Activated naive CD4-positive, alpha-beta T cell treated with anti-CD3 and anti-CD28 coated beads for 36 hours (primary cell): ENCODE measurements at regions of chr6 and their contacts with region 1.

Region 1: DNA sequence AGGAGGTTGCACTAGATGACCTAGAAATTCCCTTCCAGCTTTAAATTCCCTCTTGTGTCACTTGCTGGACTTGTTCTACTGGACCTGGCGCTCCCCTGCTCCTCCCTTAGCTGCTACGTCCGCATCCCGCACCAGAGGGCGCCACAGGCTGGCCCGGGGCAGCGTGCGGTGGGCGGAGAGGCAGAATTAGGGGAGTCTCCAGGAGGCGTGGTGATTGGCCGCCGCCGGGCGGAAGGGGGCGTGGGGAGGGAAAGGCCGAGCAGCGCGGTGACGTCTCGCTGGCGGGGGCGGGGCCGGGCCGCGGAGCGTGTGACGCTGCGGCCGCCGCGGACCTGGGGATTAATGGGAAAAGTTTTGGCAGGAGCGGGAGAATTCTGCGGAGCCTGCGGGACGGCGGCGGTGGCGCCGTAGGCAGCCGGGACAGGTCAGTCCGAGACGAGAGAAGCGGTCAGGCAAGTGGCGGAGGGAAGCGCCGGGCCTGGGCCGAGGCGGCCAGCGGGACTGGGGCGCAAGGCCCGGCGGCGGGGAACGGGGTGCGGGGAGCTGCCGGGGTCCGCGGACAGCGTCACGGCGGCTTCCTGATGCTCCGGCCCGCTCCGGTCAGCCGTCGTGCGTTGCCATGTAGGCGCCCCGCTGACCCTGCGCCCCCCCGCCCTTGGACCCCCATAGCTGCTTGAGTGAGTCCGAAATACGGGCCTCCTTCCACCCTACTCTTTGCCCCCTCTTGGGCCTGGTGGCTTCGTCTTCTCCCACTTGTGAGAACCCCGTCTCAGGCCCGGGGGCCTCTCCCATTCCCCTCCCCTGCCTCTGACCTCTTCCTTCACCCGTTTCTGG is at the start of gene PPARD:
- DNase-seq: peak; percentile 99
- H3K4me3 Mint-ChIP-seq: peak within 1 kb of the TSS; percentile 97
- H3K27ac Mint-ChIP-seq: peak within 1 kb of the TSS; percentile 89
- H3K4me1 Mint-ChIP-seq: peaks cover 37% of the 10 kb centered on the region
- H3K27me3 Mint-ChIP-seq: no peaks in the 10 kb centered on the region
- total RNA-seq, gene PPARD: 10.8 to 11.2 TPM

Region 2: DNA sequence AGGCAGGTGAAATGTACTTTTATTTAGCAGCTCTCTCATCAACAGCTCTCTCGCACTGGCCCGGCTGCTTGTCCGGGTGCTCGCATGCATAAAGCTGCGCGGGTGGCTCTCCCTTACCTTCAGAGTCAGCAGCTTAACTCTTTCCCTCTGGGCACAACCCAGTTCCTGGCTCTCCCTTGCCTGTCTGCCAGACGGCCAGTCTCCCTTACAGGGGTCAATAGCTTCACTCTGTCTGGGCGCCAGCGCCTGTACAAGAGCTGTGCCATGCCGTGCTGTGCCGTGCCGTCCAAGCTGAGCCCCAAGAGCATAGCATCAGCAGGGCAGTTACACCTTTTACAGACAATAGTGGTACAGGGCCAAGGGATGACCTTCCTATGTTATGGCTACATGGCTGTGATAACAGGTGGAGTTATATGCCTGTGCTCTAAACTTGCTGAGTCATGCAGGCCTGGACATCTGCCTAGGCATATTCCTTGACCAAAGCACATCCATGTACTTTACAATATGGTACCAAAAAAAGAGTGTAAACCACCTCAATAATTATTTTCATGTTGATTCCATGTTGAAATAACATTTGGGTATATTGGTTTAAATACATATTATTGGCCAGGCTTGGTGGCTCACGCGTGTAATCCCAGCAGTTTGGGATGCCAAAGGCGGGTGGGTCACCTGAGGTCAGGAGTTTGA is 502.7 kb before region 1 on chr6:
- CTCF ChIA-PET with region 1: no interaction called
- intact Hi-C with region 1: no loop called
- DNase-seq: no peak
- H3K4me3 Mint-ChIP-seq: no peak overlapping the region
- H3K27ac Mint-ChIP-seq: no peak overlapping the region
- H3K4me1 Mint-ChIP-seq: peaks cover 2% of the 10 kb centered on the region
- H3K27me3 Mint-ChIP-seq: no peaks in the 10 kb centered on the region

Region 3: GRCh38 chr6:35181933-35182612 is 160.4 kb before region 1 on chr6:
- CTCF ChIA-PET with region 1: no interaction called
- intact Hi-C with region 1: no loop called
- DNase-seq: no peak
- H3K4me3 Mint-ChIP-seq: no peak overlapping the region
- H3K27ac Mint-ChIP-seq: no peak overlapping the region
- H3K4me1 Mint-ChIP-seq: peaks cover 2% of the 10 kb centered on the region
- H3K27me3 Mint-ChIP-seq: peaks cover 17% of the 10 kb centered on the region

Region 4: DNA sequence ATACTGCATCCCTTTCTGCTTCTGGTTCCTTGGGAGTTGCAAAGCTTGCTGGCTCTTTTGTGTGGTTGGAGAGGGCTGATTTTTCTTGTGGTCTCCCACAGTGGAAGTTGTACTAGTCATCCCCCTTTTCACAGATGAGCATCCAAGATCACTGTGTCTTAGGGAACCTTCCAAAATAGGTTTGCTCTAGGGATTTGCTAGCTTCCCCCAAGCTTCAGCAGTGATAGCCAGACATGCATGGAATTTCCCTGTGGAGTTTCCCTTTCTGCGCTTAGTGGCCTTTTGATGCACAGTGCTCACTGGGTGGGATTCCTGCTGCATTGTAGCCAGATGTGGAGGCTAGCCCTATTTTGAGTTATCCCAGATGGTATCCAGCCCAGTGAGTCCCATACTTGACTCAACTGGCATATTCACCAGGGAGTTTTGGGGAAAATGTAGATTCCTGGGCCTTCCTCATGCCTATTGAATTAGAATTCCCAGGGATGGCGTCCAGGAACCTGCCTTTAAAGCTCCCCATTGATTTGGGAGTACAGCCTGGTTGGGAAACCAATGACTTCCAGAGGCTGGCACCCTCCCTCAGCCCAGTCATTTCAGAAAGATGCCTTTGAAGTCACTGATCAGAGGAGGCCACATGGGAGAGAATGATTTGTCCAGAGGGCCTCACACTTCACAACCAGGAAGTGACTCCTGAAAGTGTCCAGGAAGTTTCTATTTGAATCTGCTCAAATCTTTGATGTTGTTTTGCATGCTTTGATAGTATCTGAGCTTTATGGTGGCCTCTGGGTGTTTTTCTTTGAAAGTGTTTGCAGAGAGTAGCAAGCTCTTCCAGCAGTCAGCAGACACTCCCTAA is 25.8 kb after region 1 on chr6:
- CTCF ChIA-PET with region 1: interaction called, 3 read pairs
- intact Hi-C with region 1: loop called (anchors 2 kb)
- DNase-seq: peak; percentile 64
- H3K4me3 Mint-ChIP-seq: no peak overlapping the region
- H3K27ac Mint-ChIP-seq: peak overlapping the region; percentile 33
- H3K4me1 Mint-ChIP-seq: peaks cover 49% of the 10 kb centered on the region
- H3K27me3 Mint-ChIP-seq: no peaks in the 10 kb centered on the region

Region 5: DNA sequence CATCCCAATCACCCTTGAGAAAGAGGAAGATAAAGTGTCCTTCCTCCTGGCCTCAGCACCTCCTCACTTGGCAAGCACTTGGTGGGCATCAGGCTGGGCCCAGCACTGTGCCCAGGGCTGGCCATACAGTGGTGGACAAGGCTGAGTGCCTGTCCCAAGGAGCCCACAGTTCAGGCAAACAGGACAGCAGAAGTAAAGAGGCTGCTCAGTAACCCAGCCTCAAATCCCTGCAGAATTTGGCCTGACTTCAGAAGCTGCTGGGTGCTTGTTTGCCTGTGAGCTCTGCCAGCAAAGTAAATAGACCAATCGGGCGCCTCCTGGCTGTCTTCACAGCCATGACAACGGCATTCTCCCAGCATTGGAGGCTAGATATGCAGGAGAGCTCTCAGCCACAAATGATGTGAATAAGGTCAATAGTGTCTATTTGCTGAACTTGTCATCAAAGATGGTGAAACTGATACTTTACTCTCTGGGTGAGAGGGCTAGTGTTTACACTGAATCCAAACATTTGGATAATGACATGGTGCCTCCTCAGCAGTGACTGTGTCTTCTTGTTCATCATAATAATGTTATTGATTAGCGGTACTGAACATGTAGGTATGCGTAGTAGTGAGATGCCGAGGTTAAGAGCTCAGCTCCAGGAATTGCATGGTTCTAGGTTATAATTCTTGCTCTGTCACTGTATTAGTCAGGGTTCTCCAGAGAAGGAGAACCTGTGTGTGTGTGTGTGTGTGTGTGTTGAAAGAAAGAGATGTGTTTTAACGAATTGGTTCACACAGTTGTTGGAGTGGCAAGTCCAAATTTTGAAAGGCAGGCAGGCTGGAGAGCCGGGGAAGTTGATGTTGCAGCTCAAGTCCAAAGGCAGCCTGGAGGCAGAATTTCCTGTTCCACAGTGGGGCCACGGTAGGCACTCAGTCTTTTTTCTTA is 72.9 kb after region 1 on chr6:
- CTCF ChIA-PET with region 1: interaction called, 3 read pairs
- intact Hi-C with region 1: loop called (anchors 2 kb)
- DNase-seq: peak; percentile 51
- H3K4me3 Mint-ChIP-seq: no peak overlapping the region
- H3K27ac Mint-ChIP-seq: peak overlapping the region; percentile 10
- H3K4me1 Mint-ChIP-seq: peaks cover 44% of the 10 kb centered on the region
- H3K27me3 Mint-ChIP-seq: no peaks in the 10 kb centered on the region

Region 6: GRCh38 chr6:35452186-35453090 is 110.0 kb after region 1 on chr6 and contains the start of gene FANCE:
- CTCF ChIA-PET with region 1: interaction called, 132 read pairs
- intact Hi-C with region 1: loop called (anchors 1 kb)
- DNase-seq: peak; percentile 95
- H3K4me3 Mint-ChIP-seq: peak within 1 kb of the TSS; percentile 79
- H3K27ac Mint-ChIP-seq: no peak within 1 kb of the TSS
- H3K4me1 Mint-ChIP-seq: peaks cover 31% of the 10 kb centered on the region
- H3K27me3 Mint-ChIP-seq: no peaks in the 10 kb centered on the region
- total RNA-seq, gene FANCE: 16.3 TPM

Region 7: GRCh38 chr6:35468181-35468979 is 125.9 kb after region 1 on chr6 and contains the start of gene RPL10A:
- CTCF ChIA-PET with region 1: interaction called, 13 read pairs
- intact Hi-C with region 1: loop called (anchors 1 kb)
- DNase-seq: peak; percentile 98
- H3K4me3 Mint-ChIP-seq: peak within 1 kb of the TSS; percentile 95
- H3K27ac Mint-ChIP-seq: peak within 1 kb of the TSS; percentile 95
- H3K4me1 Mint-ChIP-seq: peaks cover 39% of the 10 kb centered on the region
- H3K27me3 Mint-ChIP-seq: no peaks in the 10 kb centered on the region
- total RNA-seq, gene RPL10A: 2,437 to 2,507 TPM

Region 8: GRCh38 chr6:35552285-35552917 is 209.9 kb after region 1 on chr6:
- CTCF ChIA-PET with region 1: no interaction called
- intact Hi-C with region 1: loop called (anchors 10 kb)
- DNase-seq: peak; percentile 78
- H3K4me3 Mint-ChIP-seq: no peak overlapping the region
- H3K27ac Mint-ChIP-seq: no peak overlapping the region
- H3K4me1 Mint-ChIP-seq: no peaks in the 10 kb centered on the region
- H3K27me3 Mint-ChIP-seq: no peaks in the 10 kb centered on the region

Region 9: DNA sequence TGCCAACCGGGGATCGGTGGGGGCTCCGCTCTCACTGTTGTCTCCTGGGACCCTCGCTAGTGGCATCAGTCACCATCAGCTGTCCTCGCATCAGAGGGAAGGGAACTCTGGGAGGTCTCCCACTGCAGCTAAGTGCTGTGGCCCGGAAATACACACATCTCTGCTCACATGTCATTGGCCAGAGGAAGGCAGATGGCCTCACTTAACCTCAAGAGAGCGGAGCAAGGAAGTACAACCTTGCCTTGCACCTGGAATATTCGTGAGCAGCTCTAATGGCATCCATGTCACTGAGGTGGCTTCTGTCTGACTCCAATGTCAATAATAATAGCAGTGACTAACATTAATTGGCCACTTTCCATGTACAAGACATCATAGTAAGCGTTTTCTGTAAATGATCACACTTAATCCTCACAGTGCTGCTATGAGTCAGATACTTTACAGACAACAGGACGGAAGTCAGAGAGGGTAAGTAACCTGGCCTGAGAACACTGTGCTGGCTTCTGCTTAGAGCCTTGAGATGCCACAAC is 468.6 kb after region 1 on chr6:
- CTCF ChIA-PET with region 1: no interaction called
- intact Hi-C with region 1: no loop called
- DNase-seq: no peak
- H3K4me3 Mint-ChIP-seq: no peak overlapping the region
- H3K27ac Mint-ChIP-seq: no peak overlapping the region
- H3K4me1 Mint-ChIP-seq: no peaks in the 10 kb centered on the region
- H3K27me3 Mint-ChIP-seq: peaks cover 7% of the 10 kb centered on the region